Head of caudate nucleus (tissue), 42 donors: ENCODE measurements at regions of chr10 and their contacts with region 1.

Region 1: DNA sequence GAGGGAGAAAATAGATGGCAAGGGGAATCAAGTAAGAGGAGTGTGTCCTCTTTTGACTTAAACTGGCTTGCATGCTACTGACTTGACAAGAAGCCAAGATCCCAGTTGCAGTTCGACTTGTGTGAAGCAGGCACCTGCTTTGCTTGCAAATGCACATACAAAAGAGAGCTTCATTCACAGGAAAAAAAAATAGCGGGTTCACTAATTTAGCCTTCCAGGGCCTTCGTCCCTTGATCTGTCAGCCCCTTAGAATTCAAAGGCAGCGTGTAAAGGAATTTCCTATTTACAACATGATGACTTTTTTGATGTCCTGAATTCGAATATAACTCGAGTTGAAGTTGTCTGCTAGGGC is 192.1 kb downstream of the CELF2 start:
- DNase-seq: peak in 10 of 42 donors; percentile 31 to 65 (median 57)

Region 2: GRCh38 chr10:10903620-10904019 is 306.2 kb before region 1 on chr10:
- intact Hi-C with region 1: no loop called
- DNase-seq: no peak

Region 3: DNA sequence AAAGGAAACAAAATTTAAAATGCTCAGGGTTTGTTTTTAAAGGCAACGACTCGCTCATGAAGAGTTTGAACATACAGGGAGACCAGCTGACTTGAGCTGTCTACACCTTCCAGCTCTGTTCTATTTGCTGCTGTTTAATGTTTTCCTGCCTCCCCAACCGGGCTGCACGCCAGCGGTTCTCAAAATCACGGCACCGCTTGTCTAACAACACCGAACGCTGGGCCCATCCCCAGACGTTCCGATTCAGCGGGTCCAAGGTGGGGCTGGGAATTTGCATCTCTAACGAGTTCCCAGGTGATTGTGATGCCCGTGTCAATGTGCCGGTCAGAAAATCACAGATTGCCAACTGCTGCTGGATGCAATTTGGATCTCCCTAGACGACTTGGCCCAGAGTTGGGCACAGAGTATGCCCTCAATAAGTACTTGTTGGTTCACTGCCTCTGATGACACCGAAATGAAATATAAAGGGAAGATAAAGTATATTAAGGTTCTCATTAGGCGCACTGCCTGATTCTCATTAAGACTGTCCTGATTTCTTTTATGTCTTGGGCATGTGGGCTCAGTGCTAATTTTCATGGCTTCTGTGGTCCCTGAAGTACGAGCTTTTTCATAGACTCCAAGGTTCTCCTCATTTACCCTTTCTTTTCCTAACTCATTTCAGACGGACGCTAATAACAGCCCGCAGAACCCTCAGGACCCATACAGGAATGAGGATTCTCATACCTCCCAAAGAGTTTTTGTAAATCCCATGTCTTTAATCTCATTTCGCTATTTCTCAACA is 163.6 kb before region 1 on chr10:
- intact Hi-C with region 1: loop called (anchors 10 kb)
- DNase-seq: peak in 7 of 42 donors; percentile 25 to 46 (median 32)

Region 4: DNA sequence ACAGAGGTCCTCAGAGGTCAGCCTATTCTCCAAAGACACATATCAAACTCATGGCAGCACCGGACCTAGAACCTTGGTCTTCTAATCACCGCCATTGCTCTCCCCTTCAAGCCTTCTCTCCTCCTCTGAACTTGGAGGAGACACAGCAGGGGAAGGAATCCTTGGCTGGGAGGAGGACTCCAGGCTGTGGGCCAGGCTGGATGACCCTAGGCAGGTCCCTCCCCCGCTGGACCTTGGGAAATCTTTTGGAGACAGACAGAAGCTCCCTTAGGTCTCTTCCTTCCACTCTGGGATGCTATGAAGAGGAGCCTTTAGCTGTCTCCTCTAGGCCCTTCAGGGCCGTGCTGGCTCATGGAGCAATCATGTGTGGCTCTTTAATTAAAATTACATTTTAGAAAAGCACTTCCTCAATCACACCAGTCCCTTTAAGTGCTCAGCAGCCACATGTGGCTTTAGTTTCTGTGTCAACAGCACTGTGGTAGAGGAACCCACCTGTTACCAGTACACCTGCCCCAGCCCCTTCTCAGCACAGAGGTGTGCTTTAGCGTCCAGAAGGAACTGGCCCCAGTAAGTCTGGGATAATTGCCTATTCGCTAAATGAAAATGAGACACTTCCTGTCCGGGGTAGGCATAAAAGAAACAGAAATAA is 46.1 kb after region 1 on chr10:
- intact Hi-C with region 1: no loop called
- DNase-seq: peak in 1 of 42 donors; percentile 6

Region 5: GRCh38 chr10:11272915-11273389 is 63.1 kb after region 1 on chr10:
- intact Hi-C with region 1: no loop called
- DNase-seq: peak in 1 of 42 donors; percentile 49